K562 (cell line): ENCODE measurements at regions of chr14 and their contacts with region 1.

Region 1: GRCh38 chr14:23320774-23321571 is at the start of gene PABPN1:
- DNase-seq: peak; percentile 93 to 100 (median 95)
- ATAC-seq: peak; percentile 94
- H3K4me3 ChIP-seq: peak within 1 kb of the TSS; percentile 90
- H3K27ac ChIP-seq: peak within 1 kb of the TSS; percentile 97
- H3K4me1 ChIP-seq: peaks cover 11 to 17% of the 10 kb centered on the region in 2 experiments; a peak in 4 of 5 replicates
- H3K27me3 ChIP-seq: no peaks in the 10 kb centered on the region
- CTCF ChIP-seq: no peak; a peak in 1 of 6 replicates
- EP300 ChIP-seq: no peak
- POLR2A ChIP-seq: peak; percentile 88
- RAD21 ChIP-seq: no peak
- polyA plus RNA-seq, gene PABPN1: 32.6 to 34.4 TPM

Region 2: DNA sequence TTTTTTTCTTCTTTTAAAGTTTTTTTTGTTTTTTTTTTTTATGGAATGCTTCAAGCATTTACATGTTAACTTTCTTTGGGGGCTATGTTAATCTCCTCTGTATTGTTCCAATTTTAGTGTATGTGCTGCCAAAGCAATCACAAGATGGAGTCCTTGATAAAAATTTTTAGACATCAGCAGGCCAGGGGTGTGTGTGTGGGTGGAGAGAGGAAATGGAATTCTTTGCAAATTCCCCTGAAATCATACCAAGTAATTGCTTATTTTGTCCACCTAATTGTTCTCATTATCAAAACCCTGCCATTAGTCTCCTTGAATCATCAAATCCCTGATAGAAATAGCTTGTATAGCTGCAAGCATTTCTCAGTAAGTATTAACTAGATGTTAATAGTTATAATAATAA is 61.5 kb before region 1 on chr14:
- CTCF ChIA-PET with region 1: no interaction called
- POLR2A ChIA-PET with region 1: interaction called, 5 read pairs
- in situ Hi-C with region 1: no loop called
- intact Hi-C with region 1: loop called (anchors 2 kb)
- DNase-seq: no peak
- ATAC-seq: no peak
- H3K4me3 ChIP-seq: no peak overlapping the region
- H3K27ac ChIP-seq: no peak overlapping the region
- H3K4me1 ChIP-seq: peaks cover 0 to 7% of the 10 kb centered on the region in 2 experiments; a peak in 2 of 5 replicates
- H3K27me3 ChIP-seq: no peaks in the 10 kb centered on the region
- CTCF ChIP-seq: no peak
- EP300 ChIP-seq: no peak
- POLR2A ChIP-seq: no peak
- RAD21 ChIP-seq: no peak

Region 3: GRCh38 chr14:23277189-23277588 is 43.8 kb before region 1 on chr14:
- CTCF ChIA-PET with region 1: no interaction called
- POLR2A ChIA-PET with region 1: interaction called, 12 read pairs
- in situ Hi-C with region 1: no loop called
- intact Hi-C with region 1: no loop called
- DNase-seq: no peak
- ATAC-seq: no peak
- H3K4me3 ChIP-seq: no peak overlapping the region
- H3K27ac ChIP-seq: no peak overlapping the region
- H3K4me1 ChIP-seq: peaks cover 27 to 33% of the 10 kb centered on the region in 2 experiments; a peak in 4 of 5 replicates
- H3K27me3 ChIP-seq: no peaks in the 10 kb centered on the region
- CTCF ChIP-seq: no peak
- EP300 ChIP-seq: no peak
- POLR2A ChIP-seq: no peak
- RAD21 ChIP-seq: no peak

Region 4: DNA sequence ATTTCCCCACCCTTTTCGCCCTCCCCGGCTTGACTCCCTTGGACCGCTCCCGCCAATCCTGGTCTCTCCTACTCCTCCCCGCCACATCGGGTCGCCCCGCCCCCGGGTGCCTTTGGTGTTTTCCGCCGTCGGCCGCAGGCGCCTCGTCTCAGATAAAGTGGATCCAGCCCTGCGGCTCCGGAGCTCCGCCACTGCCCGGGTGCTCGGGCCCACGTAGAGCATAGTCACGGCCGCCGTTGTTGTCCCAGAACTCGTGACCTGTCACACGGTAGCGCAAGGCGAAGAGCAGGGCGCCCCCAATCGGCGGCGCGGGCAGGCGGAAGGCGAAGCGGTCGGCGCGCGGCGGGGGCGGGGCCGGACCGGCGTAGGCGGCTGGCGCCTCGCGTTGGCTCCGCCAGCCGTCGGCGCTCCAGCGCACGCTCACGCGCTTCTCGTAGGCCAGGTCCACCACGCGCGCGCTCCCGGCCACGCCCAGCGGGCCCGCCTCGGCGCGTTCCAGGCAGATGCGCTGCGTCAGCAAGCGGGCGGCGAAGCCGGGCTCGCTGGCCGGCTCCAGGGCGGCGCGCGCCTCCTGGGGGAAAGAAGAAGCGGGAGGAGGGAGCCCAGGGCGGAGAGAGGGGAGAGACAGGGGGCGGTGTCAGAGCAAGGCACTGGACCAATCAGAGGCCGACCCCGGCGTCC is 19.5 kb before region 1 on chr14:
- CTCF ChIA-PET with region 1: no interaction called
- POLR2A ChIA-PET with region 1: interaction called, 29 read pairs
- in situ Hi-C with region 1: no loop called
- intact Hi-C with region 1: loop called (anchors 2 kb)
- DNase-seq: peak; percentile 94 to 99 (median 96)
- ATAC-seq: peak; percentile 90
- H3K4me3 ChIP-seq: peak overlapping the region; percentile 67
- H3K27ac ChIP-seq: peak overlapping the region; percentile 95
- H3K4me1 ChIP-seq: peaks cover 22 to 28% of the 10 kb centered on the region in 2 experiments
- H3K27me3 ChIP-seq: no peaks in the 10 kb centered on the region
- CTCF ChIP-seq: peak; percentile 65 to 76 (median 66)
- EP300 ChIP-seq: peak; percentile 81
- POLR2A ChIP-seq: no peak
- RAD21 ChIP-seq: peak; percentile 45 to 50

Region 5: DNA sequence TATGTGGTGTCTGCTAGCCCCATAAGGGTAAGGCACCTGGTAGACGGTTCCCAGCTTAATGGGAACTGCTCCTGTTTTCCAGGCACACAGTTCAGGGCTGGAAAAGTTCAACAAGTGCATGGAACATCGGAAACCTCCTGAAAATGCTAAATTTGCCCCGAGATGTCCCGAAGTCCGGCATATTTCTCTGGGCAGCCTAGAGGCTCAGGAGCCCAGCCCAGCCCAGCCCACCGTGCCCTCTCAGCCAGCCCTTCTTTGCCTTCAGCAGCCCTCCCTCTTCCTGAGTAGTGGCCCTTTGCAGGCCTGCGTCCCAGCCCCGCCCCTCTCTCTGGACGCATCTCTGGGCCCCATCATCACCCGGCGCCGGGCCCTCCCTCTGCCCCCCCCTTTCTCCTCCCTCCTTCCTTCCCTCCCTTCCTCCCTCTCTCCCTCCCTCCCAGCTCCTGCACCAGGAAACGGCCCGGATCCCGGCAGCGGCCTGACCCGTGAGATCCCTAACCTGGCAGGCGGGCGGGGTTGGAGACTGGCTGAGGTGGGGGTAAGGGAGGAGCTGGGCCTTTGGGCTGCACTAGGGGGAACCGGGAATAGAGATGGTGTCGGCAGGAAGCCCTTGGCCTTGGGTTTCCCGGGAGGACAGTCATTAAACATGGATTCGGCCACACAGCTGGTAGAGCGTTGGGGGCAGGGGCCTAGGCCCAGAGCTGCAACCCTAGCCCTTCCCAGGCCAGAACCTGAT is 14.4 kb before region 1 on chr14 and contains the start of gene BCL2L2:
- CTCF ChIA-PET with region 1: no interaction called
- POLR2A ChIA-PET with region 1: interaction called, 30 read pairs
- in situ Hi-C with region 1: no loop called
- intact Hi-C with region 1: loop called (anchors 2 kb)
- DNase-seq: peak; percentile 82 to 95 (median 86)
- ATAC-seq: peak; percentile 66
- H3K4me3 ChIP-seq: peak within 1 kb of the TSS; percentile 94
- H3K27ac ChIP-seq: peak within 1 kb of the TSS; percentile 90
- H3K4me1 ChIP-seq: peaks cover 21 to 42% of the 10 kb centered on the region in 2 experiments; a peak in 4 of 5 replicates
- H3K27me3 ChIP-seq: no peaks in the 10 kb centered on the region
- CTCF ChIP-seq: no peak
- EP300 ChIP-seq: peak; percentile 45; the same call in 1 of the 2 replicates
- POLR2A ChIP-seq: peak; percentile 84
- RAD21 ChIP-seq: no peak
- polyA plus RNA-seq, gene BCL2L2: 2.6 to 3.2 TPM

Region 6: GRCh38 chr14:23454445-23454856 is 133.5 kb after region 1 on chr14:
- CTCF ChIA-PET with region 1: no interaction called
- POLR2A ChIA-PET with region 1: interaction called, 4 read pairs
- in situ Hi-C with region 1: no loop called
- intact Hi-C with region 1: loop called (anchors 10 kb)
- DNase-seq: peak; percentile 43 to 89 (median 67)
- ATAC-seq: peak; percentile 99
- H3K4me3 ChIP-seq: no peak overlapping the region
- H3K27ac ChIP-seq: peak overlapping the region; percentile 83
- H3K4me1 ChIP-seq: peaks cover 3 to 10% of the 10 kb centered on the region in 2 experiments; a peak in 2 of 5 replicates
- H3K27me3 ChIP-seq: no peaks in the 10 kb centered on the region
- CTCF ChIP-seq: no peak
- EP300 ChIP-seq: peak; percentile 82
- POLR2A ChIP-seq: peak; percentile 42; the same call in 1 of the 2 replicates
- RAD21 ChIP-seq: no peak

Region 7: GRCh38 chr14:23555882-23556699 is 235.1 kb after region 1 on chr14 and contains the start of gene THTPA:
- CTCF ChIA-PET with region 1: no interaction called
- POLR2A ChIA-PET with region 1: interaction called, 5 read pairs
- in situ Hi-C with region 1: no loop called
- intact Hi-C with region 1: loop called (anchors 10 kb)
- DNase-seq: peak; percentile 80 to 90 (median 85)
- ATAC-seq: peak; percentile 89
- H3K4me3 ChIP-seq: peak within 1 kb of the TSS; percentile 68
- H3K27ac ChIP-seq: peak within 1 kb of the TSS; percentile 76
- H3K4me1 ChIP-seq: peaks cover 7 to 21% of the 10 kb centered on the region in 2 experiments; a peak in 3 of 5 replicates
- H3K27me3 ChIP-seq: no peaks in the 10 kb centered on the region
- CTCF ChIP-seq: no peak
- EP300 ChIP-seq: no peak
- POLR2A ChIP-seq: peak; percentile 82
- RAD21 ChIP-seq: no peak
- polyA plus RNA-seq, gene THTPA: 6.4 to 6.5 TPM